Sciatic nerve (tissue), 2 donors: ENCODE measurements at regions of chr10 and their contacts with region 1.

Region 1: GRCh38 chr10:30127120-30127541 is 67.7 kb upstream of the JCAD start:
- DNase-seq: no peak
- ATAC-seq: peak; percentile 67

Region 2: GRCh38 chr10:28334296-28334695 is 1792.8 kb before region 1 on chr10:
- intact Hi-C with region 1: no loop called
- DNase-seq: no peak
- ATAC-seq: peak; percentile 74

Region 3: DNA sequence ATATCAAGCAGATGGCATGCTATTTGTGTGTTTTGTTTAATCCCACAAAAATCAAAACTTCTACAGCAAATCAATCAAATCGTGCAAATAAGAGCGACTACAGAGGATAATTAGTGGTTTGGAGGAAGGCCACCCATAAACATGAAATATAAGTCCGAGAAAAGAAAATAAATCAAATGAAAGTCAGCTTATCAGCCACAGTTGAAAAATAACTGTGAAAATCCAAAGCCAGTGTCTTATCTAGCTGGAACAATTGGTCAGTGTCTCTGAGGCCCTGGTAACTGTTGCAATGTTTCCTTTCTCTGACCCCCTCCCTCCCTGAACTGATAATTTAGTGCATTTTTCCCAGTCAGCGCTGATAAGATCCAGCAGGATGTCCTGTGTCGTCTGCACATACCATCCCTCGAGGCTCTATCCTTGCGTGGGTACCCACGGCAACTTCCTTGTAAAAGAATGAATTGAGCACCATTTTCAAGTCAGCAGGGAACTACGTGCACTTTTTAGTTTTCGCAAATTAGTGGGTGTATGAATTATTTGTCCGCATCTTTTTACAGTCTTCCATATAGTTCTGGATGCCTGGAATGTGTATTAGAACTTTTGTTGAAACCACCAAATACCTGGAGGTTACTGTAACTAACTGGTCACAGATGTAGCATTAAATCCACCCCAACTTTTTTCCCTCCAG is 57.0 kb before region 1 on chr10:
- intact Hi-C with region 1: no loop called
- DNase-seq: no peak
- ATAC-seq: no peak

Region 4: GRCh38 chr10:30562787-30563186 is 435.7 kb after region 1 on chr10:
- intact Hi-C with region 1: loop called (anchors 10 kb)
- DNase-seq: no peak
- ATAC-seq: no peak

Region 5: DNA sequence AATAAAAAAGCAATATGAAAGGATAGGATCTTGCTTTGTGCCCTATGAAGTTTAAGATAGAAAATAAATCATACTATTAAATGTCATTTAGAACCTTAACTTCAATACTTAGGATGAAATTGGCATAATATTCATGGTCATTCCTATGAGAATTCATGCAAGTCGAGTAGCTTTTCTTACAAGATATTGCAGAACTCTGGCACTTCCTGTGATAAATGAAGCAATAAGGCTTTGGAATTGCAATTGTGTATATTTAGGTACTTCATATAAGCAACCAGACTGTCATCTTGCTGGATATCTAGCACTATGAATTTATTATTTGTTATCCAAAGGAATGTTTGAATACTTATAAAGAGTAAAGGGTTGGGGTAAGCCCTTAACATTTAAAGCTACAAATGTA is 788.0 kb after region 1 on chr10:
- intact Hi-C with region 1: no loop called
- DNase-seq: no peak
- ATAC-seq: no peak

Region 6: GRCh38 chr10:31479752-31480151 is 1352.6 kb after region 1 on chr10:
- intact Hi-C with region 1: no loop called
- DNase-seq: no peak
- ATAC-seq: no peak